Dendritic cell treated with granulocyte-macrophage colony-stimulating factor and Interleukin-4, amounts not matched to agents 40 ng/mL and 50 ng/mL, for 4 days (primary cell): ENCODE measurements at regions of chr22 and their contacts with region 1.

Region 1: DNA sequence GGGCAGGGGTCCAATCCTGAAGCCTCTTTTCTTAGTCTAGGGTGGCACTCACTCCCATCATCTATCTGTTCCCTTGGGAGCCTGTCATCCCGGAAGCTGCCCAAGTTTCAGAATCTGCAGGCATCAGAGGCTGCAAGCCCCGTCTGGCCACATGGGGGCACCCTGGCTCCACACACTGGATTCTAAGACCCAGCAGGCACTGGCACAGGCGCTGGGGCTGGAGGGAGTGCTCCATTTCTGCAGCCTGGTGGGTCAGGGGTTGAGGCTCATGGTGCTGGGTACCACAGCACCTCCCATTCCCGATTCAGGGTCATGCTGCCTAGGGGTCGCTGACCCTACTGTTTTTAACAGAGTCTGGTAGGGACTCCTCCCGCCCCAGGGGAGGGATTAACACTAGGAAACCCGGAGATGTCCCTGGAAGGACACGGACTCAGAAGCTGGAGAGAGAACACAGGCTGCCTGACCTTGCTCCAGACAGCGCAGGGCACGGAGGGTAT is 243.9 kb upstream of the SYN3 start:
- H3K4me3 Mint-ChIP-seq: no peak overlapping the region
- H3K27ac Mint-ChIP-seq: no peak overlapping the region
- H3K4me1 Mint-ChIP-seq: peaks cover 10% of the 10 kb centered on the region
- H3K27me3 Mint-ChIP-seq: peaks cover 2% of the 10 kb centered on the region

Region 2: GRCh38 chr22:33325235-33326004 is 23.3 kb after region 1 on chr22:
- intact Hi-C with region 1: no loop called
- H3K4me3 Mint-ChIP-seq: no peak overlapping the region
- H3K27ac Mint-ChIP-seq: no peak overlapping the region
- H3K4me1 Mint-ChIP-seq: no peaks in the 10 kb centered on the region
- H3K27me3 Mint-ChIP-seq: no peaks in the 10 kb centered on the region

Region 3: DNA sequence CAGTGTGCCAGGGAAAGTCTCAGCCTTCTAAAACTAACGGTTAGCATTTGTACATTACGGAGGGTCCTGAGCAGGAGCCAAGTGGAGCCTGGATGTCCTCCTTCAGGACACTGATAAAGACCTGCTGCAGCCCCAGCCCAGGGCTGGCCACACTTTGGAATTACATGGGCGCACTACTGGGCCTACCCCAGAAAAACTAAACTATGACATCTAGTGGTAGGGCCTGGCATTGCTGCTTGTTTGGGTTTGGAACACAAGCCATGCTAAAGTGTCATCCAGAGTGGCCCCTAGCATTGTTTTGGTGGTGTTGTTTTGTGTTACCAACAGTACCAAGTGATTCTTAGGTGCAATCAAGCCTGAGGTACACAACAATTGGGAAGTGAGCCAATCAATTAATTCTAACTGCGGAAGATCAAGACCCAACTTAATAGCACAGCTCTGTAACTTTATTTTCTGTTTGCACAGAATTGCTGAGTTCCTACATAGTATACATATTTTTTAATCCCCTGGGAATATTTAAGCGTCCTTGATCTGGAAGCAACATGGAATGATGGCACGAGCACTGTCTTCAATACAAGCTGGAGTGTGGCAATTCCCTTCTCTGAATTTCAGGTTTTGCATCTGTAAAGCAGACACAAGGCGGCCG is 277.5 kb after region 1 on chr22:
- intact Hi-C with region 1: loop called (anchors 10 kb)
- H3K4me3 Mint-ChIP-seq: no peak overlapping the region
- H3K27ac Mint-ChIP-seq: no peak overlapping the region
- H3K4me1 Mint-ChIP-seq: no peaks in the 10 kb centered on the region
- H3K27me3 Mint-ChIP-seq: no peaks in the 10 kb centered on the region

Region 4: GRCh38 chr22:34105461-34106062 is 803.5 kb after region 1 on chr22:
- intact Hi-C with region 1: loop called (anchors 5 kb)
- H3K4me3 Mint-ChIP-seq: no peak overlapping the region
- H3K27ac Mint-ChIP-seq: no peak overlapping the region
- H3K4me1 Mint-ChIP-seq: no peaks in the 10 kb centered on the region
- H3K27me3 Mint-ChIP-seq: no peaks in the 10 kb centered on the region

Region 5: DNA sequence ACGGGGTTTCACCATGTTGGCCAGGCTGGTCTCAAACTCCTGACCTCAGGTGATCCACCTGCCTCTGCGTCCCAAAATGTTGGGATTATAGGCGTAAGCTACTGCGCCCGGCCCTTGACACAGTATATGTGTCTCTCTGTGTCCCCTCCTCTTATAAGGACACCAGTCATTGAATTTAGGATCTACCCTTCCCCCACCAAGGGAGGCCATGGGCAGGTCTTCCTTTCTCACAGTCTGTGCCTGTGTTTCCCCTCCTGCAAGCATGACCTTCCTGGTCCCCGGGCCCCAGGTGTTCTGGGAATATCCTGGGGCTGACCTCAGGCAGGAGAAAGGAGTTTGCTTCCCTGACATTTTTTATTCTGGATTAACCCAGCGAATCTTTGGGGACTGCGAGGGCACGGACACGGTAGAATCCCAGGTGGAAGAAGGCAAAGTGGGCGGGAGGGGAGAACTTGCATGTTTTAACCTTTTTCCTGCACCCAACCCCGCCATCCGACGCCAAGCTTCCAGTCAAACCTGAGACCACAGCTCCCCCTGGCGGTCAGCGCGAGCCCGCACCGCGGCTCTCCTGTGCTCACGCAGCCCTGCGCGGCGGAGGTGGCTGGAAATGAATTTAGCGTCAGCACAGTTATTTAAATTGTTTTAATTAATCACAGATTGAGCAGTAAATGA is 1721.7 kb after region 1 on chr22:
- intact Hi-C with region 1: loop called (anchors 5 kb)
- H3K4me3 Mint-ChIP-seq: no peak overlapping the region
- H3K27ac Mint-ChIP-seq: no peak overlapping the region
- H3K4me1 Mint-ChIP-seq: peaks cover 5% of the 10 kb centered on the region
- H3K27me3 Mint-ChIP-seq: peaks cover 21% of the 10 kb centered on the region